ENCODE measurements at regions of chr1 and their contacts with region 1.

Region 1: DNA sequence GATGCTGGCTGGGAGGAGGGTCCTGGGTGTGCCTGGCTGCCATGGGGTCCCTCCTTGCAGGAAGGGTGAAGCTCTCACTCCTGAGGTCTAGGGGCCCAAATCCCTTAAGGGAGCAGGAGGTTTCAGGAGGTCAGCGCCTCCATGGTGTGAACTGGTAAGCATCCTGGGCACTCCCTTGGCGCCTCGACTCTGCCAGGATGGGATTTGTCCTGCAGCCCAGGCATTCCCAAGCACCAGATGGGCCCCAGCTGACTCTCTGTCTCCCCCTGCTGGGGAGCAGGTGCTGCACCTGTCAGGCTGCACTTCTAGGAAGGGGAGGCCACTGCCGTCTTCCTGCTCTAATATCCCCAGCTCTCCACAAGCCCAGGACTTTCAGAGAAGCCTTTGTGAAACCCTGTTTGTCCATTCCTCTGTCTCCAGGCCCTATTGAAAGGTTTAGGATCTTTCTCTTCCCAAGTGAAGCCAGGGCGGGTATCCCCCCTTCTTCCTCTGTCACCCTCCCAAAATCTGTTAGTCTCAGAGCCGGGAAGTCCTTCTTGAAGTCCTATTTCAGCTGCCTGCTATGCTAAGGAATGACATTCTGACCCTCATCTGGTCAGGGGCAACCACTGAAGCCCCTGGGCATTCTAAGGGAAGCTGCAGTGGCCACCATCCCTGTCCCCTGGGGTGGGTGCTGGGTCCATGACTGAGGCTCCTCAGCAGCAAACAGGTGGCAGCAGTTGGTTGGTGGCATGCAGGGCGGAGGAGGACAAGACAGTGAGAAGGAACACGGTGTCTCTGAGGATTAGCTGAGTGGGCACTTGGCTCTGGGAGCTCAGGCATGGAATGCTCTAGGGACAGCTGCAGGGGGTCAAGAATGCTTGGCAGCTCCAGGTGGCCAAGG is 3.3 kb downstream of the MYBPH start:
- DNase-seq: no peak
- H3K4me3 ChIP-seq: no peak overlapping the region
- H3K27me3 ChIP-seq: no peaks in the 10 kb centered on the region
- CTCF ChIP-seq: peak; percentile 98

Region 2: GRCh38 chr1:203117611-203118575 is 54.5 kb before region 1 on chr1:
- CTCF ChIA-PET with region 1: interaction called, 183 read pairs
- POLR2A ChIA-PET with region 1: no interaction called
- DNase-seq: no peak
- H3K4me3 ChIP-seq: no peak overlapping the region
- H3K27me3 ChIP-seq: peaks cover 38% of the 10 kb centered on the region
- CTCF ChIP-seq: peak; percentile 88

Region 3: GRCh38 chr1:203133970-203134725 is 38.2 kb before region 1 on chr1:
- CTCF ChIA-PET with region 1: interaction called, 14 read pairs
- POLR2A ChIA-PET with region 1: no interaction called
- DNase-seq: no peak
- H3K4me3 ChIP-seq: no peak overlapping the region
- H3K27me3 ChIP-seq: no peaks in the 10 kb centered on the region
- CTCF ChIP-seq: no peak

Region 4: GRCh38 chr1:203148125-203148524 is 24.2 kb before region 1 on chr1:
- CTCF ChIA-PET with region 1: interaction called, 36 read pairs
- POLR2A ChIA-PET with region 1: no interaction called
- DNase-seq: no peak
- H3K4me3 ChIP-seq: no peak overlapping the region
- H3K27me3 ChIP-seq: no peaks in the 10 kb centered on the region
- CTCF ChIP-seq: 0 out of 2 replicates have a peak, but pooled peaks have one; percentile 19

Region 5: GRCh38 chr1:203186446-203187303 is 14.3 kb after region 1 on chr1 and contains the start of gene CHI3L1:
- CTCF ChIA-PET with region 1: interaction called, 60 read pairs
- POLR2A ChIA-PET with region 1: no interaction called
- DNase-seq: no peak
- H3K4me3 ChIP-seq: no peak within 1 kb of the TSS
- H3K27me3 ChIP-seq: peaks cover 3% of the 10 kb centered on the region; the same call in 1 of the 2 replicates
- CTCF ChIP-seq: no peak
- polyA plus RNA-seq, gene CHI3L1: 0.10 and 0.20 TPM in 2 replicates

Region 6: GRCh38 chr1:203202431-203203245 is 30.3 kb after region 1 on chr1:
- CTCF ChIA-PET with region 1: interaction called, 17 read pairs
- POLR2A ChIA-PET with region 1: no interaction called
- DNase-seq: peak; percentile 69
- H3K4me3 ChIP-seq: no peak overlapping the region
- H3K27me3 ChIP-seq: no peaks in the 10 kb centered on the region
- CTCF ChIP-seq: no peak

Region 7: GRCh38 chr1:203239526-203240305 is 67.3 kb after region 1 on chr1:
- CTCF ChIA-PET with region 1: no interaction called
- POLR2A ChIA-PET with region 1: no interaction called
- DNase-seq: no peak
- H3K4me3 ChIP-seq: no peak overlapping the region
- H3K27me3 ChIP-seq: no peaks in the 10 kb centered on the region; the same call in none of the 2 replicates
- CTCF ChIP-seq: no peak

Region 8: DNA sequence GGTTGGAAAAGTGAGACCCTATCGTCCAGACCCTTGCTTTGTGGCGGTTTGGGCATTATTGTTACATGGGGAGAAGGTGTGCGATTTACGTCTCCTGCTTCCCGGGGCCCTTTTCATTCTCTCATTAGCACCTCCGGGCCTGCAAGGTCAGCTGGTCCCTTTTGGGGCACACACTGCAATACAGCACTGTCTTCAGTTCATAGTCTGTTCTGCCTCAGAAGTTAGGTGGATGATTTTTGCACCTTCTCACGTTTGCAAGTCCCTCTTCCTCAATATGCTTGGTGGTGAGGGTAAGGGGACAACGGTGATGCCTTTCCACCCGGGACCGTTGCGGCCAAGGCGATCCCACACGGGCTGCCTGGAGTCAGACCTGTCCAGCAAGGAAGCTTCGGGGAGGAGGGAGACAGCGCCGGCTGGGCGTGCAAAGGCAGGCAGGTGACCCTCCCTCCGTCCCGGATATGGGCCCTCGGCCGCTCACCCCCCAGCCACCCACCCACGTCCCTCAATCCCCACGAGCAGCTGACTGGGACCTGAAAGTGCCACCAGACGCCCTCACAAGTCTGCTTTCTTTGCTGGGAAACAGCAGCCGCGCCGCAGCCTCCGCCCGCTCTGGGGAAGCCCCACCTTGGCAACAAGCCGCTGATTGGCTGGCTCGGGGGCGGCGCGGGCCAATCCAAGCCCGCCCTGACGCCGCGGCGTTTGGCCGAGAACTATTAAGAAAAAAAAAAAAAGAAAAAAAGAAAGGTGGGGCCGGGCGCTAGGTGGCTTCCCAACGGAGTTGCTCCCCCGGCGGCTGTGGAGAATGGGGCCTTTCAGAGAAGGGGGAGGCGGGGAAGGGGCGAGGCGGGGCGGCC is 154.7 kb after region 1 on chr1:
- CTCF ChIA-PET with region 1: no interaction called
- POLR2A ChIA-PET with region 1: no interaction called
- DNase-seq: no peak
- H3K4me3 ChIP-seq: peak overlapping the region; percentile 49
- H3K27me3 ChIP-seq: peaks cover 32% of the 10 kb centered on the region
- CTCF ChIP-seq: no peak

Measured in BJ (cell line).